ENCODE measurements at regions of chr11 and their contacts with region 1.

Region 1: DNA sequence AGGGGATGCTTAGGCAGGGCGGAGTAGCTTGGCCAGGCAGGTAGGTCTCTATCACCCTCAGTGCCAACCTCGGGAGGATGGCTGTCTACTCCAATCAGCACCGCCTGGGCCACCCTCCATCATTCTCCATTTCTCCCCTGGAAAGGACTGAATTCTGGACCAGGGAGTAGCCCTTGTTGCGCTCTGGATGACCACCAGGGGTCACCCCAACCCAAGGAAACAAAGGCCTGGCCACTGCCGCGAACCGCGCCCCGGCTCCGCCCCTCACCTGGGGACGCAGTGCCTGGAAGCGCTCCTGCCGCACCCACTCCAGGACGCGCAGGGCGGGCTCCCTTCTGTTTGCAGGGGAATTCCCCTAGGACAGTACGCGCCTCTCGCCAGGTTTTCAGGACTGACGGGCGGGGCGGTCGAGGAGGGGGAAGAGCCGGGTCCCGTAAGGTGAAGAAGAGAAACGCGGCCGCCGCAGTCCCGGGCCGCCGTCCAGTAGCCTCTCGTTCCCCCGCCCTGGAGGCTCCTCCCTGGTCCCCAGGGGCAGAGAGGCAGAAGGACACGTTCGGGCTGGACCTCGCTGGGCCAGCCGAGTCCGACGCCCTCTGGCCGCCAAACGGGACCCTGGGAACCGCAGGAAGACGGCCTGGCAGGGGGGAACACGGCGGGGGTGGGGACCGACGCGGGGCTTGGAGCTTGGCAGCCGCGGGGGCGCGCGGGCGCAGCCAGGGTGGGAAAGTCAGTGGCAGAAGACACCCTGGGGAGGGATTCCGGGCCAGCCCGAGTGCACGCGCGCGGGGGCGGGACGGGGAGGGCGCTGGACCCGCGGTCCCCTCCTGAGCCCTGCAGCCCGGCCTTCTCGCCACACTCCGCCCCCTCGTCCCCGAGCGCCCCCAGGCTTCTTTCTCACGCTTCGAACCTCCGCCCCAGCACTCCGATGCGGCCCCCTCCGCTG is 7.1 kb downstream of the SCN4B start:
- DNase-seq: peak; percentile 20
- H3K4me3 ChIP-seq: peak overlapping the region; percentile 53
- CTCF ChIP-seq: peak; percentile 81

Region 2: DNA sequence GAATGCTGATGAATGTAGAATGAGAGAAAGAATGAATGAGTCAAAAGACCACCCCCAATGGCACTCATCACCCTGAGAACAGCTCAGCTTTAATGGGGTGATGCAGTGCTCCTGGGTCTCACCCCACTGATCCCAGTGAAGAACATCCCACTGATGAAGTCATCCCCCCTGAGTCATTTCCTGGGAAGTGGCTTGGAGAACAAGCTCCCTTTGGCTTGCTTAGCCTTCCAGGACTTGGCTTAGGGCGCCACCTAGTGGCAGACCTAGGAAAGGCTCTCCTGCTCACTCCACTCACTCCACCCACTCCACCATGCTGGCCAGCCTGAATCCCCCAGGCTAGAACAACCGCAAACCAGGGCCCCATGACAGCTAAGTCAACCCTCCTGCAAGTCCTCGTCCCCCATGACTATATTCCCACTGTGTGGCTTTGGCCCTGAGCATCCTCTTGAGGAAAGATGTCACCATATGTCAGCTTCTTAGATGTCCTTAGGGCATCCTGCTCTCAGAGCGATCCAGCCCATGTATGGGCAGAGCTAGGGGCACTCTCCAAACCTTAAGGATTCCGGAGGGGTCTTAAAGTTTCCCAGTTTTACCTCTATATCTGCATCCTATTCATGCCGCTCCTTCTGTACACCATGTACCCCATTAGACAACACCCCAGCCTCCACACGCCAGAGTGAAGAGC is 198.6 kb before region 1 on chr11:
- in situ Hi-C with region 1: no loop called
- DNase-seq: peak; percentile 82
- H3K4me3 ChIP-seq: no peak overlapping the region
- CTCF ChIP-seq: peak; percentile 93

Region 3: DNA sequence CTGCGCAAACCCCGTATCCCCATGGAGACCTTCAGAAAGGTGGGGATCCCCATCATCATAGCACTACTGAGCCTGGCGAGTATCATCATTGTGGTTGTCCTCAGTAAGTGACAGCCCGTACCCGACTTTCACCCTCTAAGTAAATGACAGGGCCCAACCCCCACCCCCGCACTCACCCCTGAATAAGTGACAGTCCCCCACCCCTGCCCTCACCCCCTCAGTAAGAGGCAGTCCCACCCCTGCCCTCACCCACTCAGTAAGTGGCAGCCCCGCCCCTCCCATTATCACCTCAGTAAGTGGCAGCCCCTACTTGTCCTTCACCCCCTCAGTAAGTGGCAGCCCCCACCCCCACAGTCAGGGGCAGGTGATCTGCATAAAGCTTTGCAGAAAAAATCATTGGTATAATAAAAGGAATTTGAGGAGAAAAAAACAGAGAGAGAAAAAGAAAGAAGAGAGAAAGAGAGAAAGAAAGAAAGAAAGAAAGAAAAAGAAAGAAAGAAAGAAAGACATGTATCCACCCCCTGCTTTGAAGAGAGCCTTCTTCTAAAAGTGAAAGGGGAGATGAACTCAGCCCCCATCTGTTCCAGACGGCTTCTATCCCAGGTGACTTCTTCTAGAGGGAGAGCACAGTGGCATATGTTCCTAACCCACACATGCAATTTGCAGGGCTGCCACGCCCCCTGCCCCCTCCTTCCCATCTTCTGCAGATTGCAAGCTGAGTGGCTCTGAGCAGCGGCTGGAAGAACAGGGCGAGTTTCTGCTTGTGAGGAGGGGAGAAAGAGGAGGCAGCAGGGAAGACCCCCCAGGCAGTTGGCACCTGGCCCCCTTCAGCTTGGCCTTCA is 46.3 kb before region 1 on chr11:
- in situ Hi-C with region 1: no loop called
- DNase-seq: no peak
- H3K4me3 ChIP-seq: no peak overlapping the region
- CTCF ChIP-seq: no peak

Region 4: DNA sequence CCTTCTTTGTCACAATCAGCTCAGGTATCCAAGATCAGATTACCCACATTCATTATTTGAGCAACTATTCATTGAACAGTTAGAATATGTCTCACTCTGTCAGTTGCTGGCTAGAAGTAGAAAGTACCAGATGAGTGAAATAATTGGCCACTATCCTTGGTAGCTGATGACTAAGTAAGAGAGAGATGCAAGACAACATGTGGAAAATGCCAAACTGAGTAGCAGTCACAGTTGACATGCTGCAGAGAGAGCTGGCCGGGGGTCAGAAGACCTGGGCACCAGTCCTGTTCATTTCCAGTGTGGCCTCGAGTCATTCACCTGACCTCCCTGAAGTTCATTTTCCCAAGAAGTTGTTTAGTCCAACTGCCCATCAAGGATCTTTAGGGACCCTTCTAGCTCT is 36.3 kb before region 1 on chr11:
- in situ Hi-C with region 1: no loop called
- DNase-seq: no peak
- H3K4me3 ChIP-seq: no peak overlapping the region
- CTCF ChIP-seq: no peak

Region 5: GRCh38 chr11:118240999-118241768 is 95.6 kb after region 1 on chr11:
- in situ Hi-C with region 1: loop called (anchors 5 kb)
- DNase-seq: no peak
- H3K4me3 ChIP-seq: no peak overlapping the region
- CTCF ChIP-seq: no peak

Region 6: GRCh38 chr11:118287006-118287405 is 141.4 kb after region 1 on chr11:
- in situ Hi-C with region 1: no loop called
- DNase-seq: no peak
- H3K4me3 ChIP-seq: no peak overlapping the region
- CTCF ChIP-seq: no peak

Measured in astrocyte of the cerebellum (primary cell).